Right cardiac atrium (tissue), 5 donors: ENCODE measurements at regions of chr20 and their contacts with region 1.

Region 1: GRCh38 chr20:32920066-32920465 is 61.3 kb downstream of the EFCAB8 start:
- DNase-seq: no peak
- ATAC-seq: no peak
- H3K4me3 ChIP-seq: no peak overlapping the region
- H3K27ac ChIP-seq: no peak overlapping the region
- H3K4me1 ChIP-seq: no peaks in the 10 kb centered on the region
- H3K27me3 ChIP-seq: no peaks in the 10 kb centered on the region

Region 2: DNA sequence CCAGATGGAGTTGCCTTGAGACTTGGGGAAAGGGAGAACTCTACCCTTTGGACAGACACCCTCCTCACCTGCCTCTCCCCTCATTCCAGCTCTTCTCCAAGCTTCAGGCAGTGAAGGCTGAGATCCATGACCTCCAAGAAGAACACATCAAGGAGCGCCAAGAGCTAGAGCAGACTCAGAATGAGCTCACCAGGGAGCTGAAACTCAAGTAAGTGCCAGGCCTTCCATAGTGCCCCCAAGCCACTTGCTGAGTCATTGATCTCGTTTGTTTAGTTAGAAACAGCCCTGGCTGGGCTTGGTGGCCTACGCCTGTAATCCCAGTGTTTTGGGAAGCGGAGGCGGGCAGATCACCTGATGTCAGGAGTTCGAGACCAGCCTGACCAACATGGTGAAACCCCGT is 603.4 kb before region 1 on chr20:
- intact Hi-C with region 1: no loop called
- DNase-seq: no peak
- ATAC-seq: no peak
- H3K4me3 ChIP-seq: no peak overlapping the region
- H3K27ac ChIP-seq: no peak overlapping the region
- H3K4me1 ChIP-seq: no peaks in the 10 kb centered on the region
- H3K27me3 ChIP-seq: no peaks in the 10 kb centered on the region

Region 3: DNA sequence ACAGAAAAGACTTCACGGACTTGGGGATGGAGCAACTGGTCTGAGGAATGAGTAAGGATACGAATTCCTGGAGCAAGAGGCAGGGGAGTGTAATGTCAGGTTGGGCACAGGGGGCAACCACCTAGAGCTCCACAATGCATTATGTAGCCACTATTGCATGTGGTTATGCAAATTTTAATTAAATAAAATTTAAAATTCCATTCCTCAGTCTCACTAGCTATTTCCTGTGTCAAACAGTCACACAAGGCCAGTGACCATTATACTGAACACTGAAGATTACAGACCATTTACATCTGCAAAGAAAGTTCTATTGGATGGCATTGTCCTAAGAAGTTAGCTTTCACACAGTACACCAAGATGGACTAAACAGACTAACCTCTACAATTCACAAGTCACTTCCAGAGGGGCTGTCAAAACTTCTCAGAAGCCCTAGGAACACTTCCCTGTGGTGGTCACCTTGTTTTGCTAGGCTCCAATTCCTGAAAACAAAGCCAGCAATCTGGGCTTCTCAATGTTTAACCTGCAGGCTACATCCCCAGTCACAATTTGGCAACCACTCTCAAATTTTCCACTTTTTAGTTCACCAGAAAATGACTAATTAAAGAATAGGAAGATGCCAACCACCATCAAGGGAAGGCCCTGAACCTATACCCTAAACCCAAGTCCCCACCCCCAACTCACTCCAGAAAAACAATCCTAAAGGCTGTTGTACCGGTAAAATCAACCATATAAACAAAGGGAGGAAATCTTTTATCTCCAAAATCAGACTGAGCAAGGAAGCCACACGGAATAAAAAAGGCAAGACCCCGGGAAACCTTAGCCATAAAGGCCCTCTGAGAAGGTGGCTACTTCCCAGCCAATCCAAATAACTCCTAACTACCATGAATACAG is 212.1 kb before region 1 on chr20:
- intact Hi-C with region 1: no loop called
- DNase-seq: no peak
- ATAC-seq: peak in 1 of 2 donors; percentile 74
- H3K4me3 ChIP-seq: no peak overlapping the region
- H3K27ac ChIP-seq: peak overlapping the region; percentile 30
- H3K4me1 ChIP-seq: peaks cover 8% of the 10 kb centered on the region
- H3K27me3 ChIP-seq: no peaks in the 10 kb centered on the region

Region 4: DNA sequence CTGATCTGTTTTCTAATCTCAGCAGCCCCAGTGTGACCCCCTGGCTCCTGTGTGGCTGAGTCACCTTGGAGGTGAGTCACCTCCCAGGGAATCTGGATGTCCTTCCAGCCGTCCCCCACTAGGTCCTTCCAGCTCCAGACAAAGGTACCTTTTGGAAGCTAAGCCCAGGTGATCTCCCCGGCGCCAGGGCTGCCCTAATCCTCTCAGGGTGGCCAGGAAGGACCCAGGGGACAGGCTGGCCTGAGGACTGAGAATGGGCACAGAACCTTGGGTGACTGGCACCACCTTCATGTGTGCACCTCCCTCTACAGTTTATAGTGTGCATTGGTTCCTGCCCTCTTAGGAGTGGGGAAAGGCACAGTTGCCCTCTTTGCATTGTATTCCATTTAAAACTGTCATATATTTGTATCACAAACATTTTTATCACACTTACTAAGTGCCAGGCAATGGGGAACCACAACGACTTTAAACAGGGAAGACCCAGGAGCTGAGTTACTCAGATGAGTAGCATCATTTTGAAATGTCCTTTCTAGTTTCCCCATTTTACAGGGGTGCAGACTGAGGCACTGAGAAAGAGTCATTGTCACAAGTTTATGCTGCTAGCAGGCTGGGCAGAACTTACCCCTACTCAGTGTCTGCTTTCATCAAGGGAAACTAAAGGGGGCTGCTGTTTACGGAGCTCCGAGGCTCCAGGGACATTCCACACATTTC is 156.8 kb after region 1 on chr20:
- intact Hi-C with region 1: loop called in 1 of 4 experiments (anchors 2 kb)
- DNase-seq: no peak
- ATAC-seq: no peak
- H3K4me3 ChIP-seq: no peak overlapping the region
- H3K27ac ChIP-seq: no peak overlapping the region
- H3K4me1 ChIP-seq: no peaks in the 10 kb centered on the region
- H3K27me3 ChIP-seq: no peaks in the 10 kb centered on the region